Dendritic cell treated with granulocyte-macrophage colony-stimulating factor and Interleukin-4, amounts not matched to agents 40 ng/mL and 50 ng/mL, for 4 days (primary cell): ENCODE measurements at regions of chr10 and their contacts with region 1.

Region 1: GRCh38 chr10:35563261-35563891 is 41.8 kb upstream of the GJD4 start:
- H3K4me3 Mint-ChIP-seq: no peak overlapping the region
- H3K27ac Mint-ChIP-seq: no peak overlapping the region
- H3K4me1 Mint-ChIP-seq: peaks cover 32% of the 10 kb centered on the region
- H3K27me3 Mint-ChIP-seq: no peaks in the 10 kb centered on the region

Region 2: DNA sequence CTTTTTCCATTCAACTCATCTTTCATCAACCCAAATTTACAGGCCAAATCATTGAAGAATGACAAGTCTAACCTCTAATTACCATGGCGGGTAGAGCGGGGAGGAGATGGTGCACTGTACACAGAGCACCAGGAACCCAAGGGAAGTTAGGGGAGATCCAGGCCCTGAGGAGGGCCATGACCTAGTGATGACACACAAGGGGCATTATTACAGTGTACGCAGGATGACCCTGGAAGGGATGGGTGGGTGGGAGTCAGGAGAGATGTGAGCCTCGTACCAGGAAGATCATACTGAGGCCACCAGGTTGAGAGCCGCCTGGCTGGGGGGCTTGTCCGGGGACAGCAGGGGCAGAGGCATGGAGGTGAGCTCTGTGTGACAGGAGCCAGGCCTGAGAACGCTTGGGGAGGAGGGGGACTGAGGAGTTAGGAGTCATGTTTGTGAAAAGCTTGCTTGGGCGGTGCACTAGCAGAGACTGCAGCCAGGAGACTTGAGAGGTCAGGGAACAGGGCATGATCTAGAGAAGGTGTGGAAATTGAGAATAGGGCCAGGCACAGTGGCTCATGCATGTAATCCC is 316.5 kb before region 1 on chr10:
- intact Hi-C with region 1: loop called (anchors 10 kb)
- H3K4me3 Mint-ChIP-seq: no peak overlapping the region
- H3K27ac Mint-ChIP-seq: no peak overlapping the region
- H3K4me1 Mint-ChIP-seq: no peaks in the 10 kb centered on the region
- H3K27me3 Mint-ChIP-seq: peaks cover 7% of the 10 kb centered on the region